Esophagus muscularis mucosa (tissue), 4 donors: ENCODE measurements at regions of chr5 and their contacts with region 1.

Region 1: GRCh38 chr5:73519531-73520283 is 21.5 kb downstream of the BTF3 start:
- DNase-seq: no peak
- H3K4me3 ChIP-seq: no peak overlapping the region
- H3K27ac ChIP-seq: no peak overlapping the region
- H3K4me1 ChIP-seq: peaks cover 0 to 14% (median 2%) of the 10 kb centered on the region in 4 donors
- H3K27me3 ChIP-seq: no peaks in the 10 kb centered on the region
- CTCF ChIP-seq: peak; percentile 58 to 76 (median 64)
- EP300 ChIP-seq: no peak
- POLR2A ChIP-seq: no peak

Region 2: DNA sequence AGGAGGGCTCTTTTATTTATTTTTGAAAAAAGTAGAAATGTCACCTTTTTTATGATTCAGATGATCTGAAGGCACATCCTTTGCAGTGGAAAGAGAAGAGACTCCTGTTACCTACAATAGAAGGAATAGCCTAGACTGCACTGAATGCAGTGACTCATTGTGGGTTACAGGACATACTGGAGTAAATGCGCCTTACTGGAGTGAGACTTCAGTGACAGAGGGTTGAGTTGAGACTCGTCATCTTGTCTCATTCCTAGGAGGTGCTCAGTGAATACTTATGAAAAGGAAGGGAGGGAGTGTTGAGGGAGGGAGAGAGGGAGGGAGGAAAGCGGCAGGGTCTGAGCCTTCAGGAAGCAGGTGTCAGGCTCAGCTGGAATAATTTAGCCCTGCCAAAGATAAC is 20.5 kb after region 1 on chr5:
- intact Hi-C with region 1: loop called (anchors 1 kb)
- DNase-seq: no peak
- H3K4me3 ChIP-seq: no peak overlapping the region
- H3K27ac ChIP-seq: no peak overlapping the region
- H3K4me1 ChIP-seq: peaks cover 8 to 31% (median 24%) of the 10 kb centered on the region in 4 donors
- H3K27me3 ChIP-seq: no peaks in the 10 kb centered on the region
- CTCF ChIP-seq: no peak
- EP300 ChIP-seq: no peak
- POLR2A ChIP-seq: no peak